Activated CD4-positive, alpha-beta memory T cell treated with anti-CD3 and anti-CD28 coated beads for 36 hours (primary cell): ENCODE measurements at regions of chr2 and their contacts with region 1.

Region 1: GRCh38 chr2:174603280-174603679 is 5.7 kb upstream of the WIPF1 start:
- DNase-seq: peak; percentile 80
- H3K4me3 Mint-ChIP-seq: no peak overlapping the region
- H3K27ac Mint-ChIP-seq: peak overlapping the region; percentile 85
- H3K4me1 Mint-ChIP-seq: peaks cover 85% of the 10 kb centered on the region
- H3K27me3 Mint-ChIP-seq: no peaks in the 10 kb centered on the region

Region 2: DNA sequence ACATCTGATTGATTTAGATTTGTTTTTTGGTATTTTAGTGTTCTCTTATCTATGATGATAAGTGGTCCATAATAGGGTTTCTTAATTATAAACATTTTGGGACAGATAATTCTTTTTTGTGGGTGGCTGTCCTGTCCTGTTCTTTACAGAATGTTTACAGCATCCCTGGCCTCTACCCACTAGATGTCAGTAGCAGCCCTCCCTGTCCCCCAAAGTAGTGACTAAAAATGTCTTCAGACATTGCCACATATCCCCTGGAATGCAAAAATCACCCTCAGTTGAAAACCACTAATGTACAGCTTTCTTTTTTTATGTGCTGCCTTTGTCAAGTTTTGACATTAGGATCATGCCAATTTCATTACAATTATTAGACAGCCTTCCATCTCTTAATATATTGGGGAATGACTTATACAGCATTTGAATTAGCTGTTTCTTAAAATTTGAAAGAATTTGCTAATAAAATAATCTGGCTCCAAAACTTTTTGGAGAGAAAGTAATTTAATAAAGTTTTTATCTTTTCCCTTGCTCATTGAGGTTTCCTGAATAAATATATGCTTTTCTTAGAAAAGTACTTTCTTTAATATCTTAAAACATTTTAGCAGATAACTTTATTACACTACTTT is 25.2 kb before region 1 on chr2:
- CTCF ChIA-PET with region 1: interaction called, 55 read pairs
- POLR2A ChIA-PET with region 1: interaction called, 53 read pairs
- intact Hi-C with region 1: loop called (anchors 1 kb)
- DNase-seq: peak; percentile 70
- H3K4me3 Mint-ChIP-seq: no peak overlapping the region
- H3K27ac Mint-ChIP-seq: peak overlapping the region; percentile 54
- H3K4me1 Mint-ChIP-seq: peaks cover 78% of the 10 kb centered on the region
- H3K27me3 Mint-ChIP-seq: no peaks in the 10 kb centered on the region

Region 3: DNA sequence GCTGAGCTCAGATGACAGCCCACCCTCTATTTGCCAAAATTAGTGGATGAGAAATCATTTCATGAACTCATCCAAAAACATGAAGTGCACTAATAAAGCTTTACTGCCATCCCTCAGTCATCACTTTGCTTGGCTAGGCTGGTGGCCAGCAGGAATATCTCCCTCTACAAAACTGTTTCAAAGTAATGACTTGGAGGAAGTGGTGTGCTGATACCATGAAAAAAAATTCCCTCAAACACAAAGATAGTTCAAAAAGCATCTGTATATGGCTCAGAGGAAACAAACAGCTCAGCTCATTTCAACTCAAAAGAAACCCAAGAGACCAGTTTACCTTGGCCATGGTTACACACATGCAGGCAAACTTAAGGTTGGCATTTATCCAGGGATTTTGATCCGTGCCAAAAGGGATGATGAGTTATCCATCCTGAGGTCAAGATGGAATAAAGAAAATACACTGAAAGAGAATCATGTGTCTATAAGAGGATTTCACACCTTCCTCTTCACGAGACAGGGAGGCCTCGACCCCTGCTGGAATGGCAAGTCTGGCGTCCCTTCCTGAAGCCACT is 12.7 kb after region 1 on chr2:
- CTCF ChIA-PET with region 1: interaction called, 19 read pairs
- POLR2A ChIA-PET with region 1: interaction called, 110 read pairs
- intact Hi-C with region 1: loop called (anchors 1 kb)
- DNase-seq: no peak
- H3K4me3 Mint-ChIP-seq: peak overlapping the region; percentile 5
- H3K27ac Mint-ChIP-seq: peak overlapping the region; percentile 85
- H3K4me1 Mint-ChIP-seq: peaks cover 84% of the 10 kb centered on the region
- H3K27me3 Mint-ChIP-seq: no peaks in the 10 kb centered on the region

Region 4: DNA sequence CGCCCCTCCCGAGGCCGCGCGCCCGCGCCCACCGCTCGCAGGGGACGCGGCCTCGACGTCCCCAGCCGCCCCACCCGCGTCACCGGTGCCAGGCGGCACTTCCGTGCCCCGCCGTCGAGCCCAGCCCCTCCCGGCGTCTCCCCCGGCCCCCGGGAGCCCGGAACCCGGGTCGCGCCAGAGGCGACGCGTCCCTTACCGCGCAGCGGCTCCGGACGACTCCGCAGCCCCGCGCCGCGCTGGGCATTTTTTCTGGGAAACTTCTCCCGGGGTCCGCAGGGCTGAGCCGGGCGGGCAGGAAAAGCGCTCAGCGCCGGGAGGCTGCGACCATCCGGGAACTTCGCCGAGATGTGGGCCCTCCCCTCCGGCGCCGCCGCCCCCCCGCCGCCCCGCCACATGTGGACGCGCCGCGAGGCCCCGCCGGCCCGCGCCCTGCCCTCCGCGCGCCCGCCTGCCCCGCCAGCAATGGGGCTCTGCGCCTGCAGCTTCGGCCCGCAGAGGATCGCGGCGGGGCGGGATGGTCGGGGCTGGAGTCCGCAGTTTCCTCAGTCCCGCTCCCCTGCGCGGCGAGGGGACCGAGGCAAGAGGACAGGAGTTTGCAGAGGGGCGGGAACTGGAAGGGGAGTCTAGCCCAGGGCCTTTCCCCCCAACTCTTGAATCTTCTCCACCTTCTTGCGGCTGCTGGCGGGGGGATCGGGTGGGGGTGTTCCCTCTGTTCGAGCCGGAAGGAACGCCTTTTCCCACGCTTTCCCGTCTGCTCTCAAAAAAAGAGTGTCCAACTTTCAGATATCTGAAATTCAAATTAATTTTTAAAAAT is 79.5 kb after region 1 on chr2:
- CTCF ChIA-PET with region 1: interaction called, 96 read pairs
- POLR2A ChIA-PET with region 1: interaction called, 3 read pairs
- intact Hi-C with region 1: loop called (anchors 1 kb)
- DNase-seq: peak; percentile 62
- H3K4me3 Mint-ChIP-seq: peak overlapping the region; percentile 86
- H3K27ac Mint-ChIP-seq: peak overlapping the region; percentile 88
- H3K4me1 Mint-ChIP-seq: peaks cover 54% of the 10 kb centered on the region
- H3K27me3 Mint-ChIP-seq: no peaks in the 10 kb centered on the region

Region 5: DNA sequence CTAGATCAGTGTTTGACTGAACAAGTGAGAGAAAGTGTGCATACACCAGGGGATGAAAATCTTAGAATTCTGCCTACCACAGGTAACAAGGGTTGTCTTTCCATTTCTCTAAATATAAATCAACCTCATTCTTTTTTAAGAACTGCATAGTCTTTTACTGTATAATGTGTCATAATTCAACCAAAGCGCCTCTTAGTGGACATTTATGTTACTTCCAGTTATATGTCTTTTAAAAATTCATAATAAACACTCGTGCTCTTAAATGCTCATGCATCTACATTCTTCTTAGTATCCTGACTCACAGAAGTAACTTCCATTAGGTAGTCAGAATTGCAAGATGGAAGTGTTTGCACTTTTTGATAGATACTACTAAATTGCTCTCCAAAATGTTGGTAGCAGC is 84.8 kb after region 1 on chr2:
- CTCF ChIA-PET with region 1: interaction called, 96 read pairs
- POLR2A ChIA-PET with region 1: interaction called, 3 read pairs
- intact Hi-C with region 1: loop called (anchors 1 kb)
- DNase-seq: no peak
- H3K4me3 Mint-ChIP-seq: no peak overlapping the region
- H3K27ac Mint-ChIP-seq: no peak overlapping the region
- H3K4me1 Mint-ChIP-seq: peaks cover 32% of the 10 kb centered on the region
- H3K27me3 Mint-ChIP-seq: no peaks in the 10 kb centered on the region